IMR-90 (cell line): ENCODE measurements at regions of chr1 and their contacts with region 1.

Region 1: DNA sequence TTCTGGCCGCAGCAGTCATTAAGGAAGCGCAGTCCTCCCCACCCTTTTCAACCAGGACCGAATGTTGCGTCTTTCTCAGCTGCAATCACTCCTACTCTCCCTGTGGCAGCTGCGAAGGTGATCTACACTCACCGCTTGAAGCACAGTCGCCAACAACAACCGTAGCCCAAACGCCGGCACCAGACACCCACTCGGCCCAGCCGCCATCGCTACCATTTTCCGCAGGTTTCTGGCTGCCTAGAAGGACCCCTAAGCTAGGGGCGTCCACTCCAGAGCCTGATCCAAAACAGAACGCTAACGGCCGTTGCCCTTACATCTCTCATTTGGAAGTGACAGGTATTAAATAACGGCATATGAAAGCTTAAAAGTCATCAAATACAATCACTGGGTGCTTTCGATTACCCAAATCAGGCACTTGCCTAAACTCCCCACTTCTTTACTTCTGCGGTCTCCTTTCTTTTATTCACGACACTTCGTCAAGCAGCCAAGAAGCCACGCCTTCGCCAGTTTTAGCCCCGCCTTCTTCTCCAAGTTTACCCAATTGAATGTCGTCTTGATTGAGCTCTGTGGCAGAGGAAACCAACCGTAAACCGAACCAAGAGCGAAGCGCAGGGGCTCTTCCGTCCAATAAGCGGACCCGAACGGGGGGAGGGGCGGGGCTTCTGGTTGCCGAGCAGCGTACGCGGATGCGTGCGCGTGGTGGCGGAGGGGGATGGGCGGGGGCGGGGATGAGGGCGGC is at the start of gene SELENOF:
- DNase-seq: peak; percentile 100
- ATAC-seq: peak; percentile 94
- H3K4me3 ChIP-seq: peak within 1 kb of the TSS; percentile 85
- H3K27ac ChIP-seq: peak within 1 kb of the TSS; percentile 79
- H3K4me1 ChIP-seq: peaks cover 4% of the 10 kb centered on the region; the same call in 1 of the 2 replicates
- H3K27me3 ChIP-seq: no peaks in the 10 kb centered on the region
- CTCF ChIP-seq: no peak
- POLR2A ChIP-seq: peak; percentile 83
- RAD21 ChIP-seq: no peak
- total RNA-seq, gene SELENOF: 60.0 and 128 TPM in 2 replicates

Region 2: DNA sequence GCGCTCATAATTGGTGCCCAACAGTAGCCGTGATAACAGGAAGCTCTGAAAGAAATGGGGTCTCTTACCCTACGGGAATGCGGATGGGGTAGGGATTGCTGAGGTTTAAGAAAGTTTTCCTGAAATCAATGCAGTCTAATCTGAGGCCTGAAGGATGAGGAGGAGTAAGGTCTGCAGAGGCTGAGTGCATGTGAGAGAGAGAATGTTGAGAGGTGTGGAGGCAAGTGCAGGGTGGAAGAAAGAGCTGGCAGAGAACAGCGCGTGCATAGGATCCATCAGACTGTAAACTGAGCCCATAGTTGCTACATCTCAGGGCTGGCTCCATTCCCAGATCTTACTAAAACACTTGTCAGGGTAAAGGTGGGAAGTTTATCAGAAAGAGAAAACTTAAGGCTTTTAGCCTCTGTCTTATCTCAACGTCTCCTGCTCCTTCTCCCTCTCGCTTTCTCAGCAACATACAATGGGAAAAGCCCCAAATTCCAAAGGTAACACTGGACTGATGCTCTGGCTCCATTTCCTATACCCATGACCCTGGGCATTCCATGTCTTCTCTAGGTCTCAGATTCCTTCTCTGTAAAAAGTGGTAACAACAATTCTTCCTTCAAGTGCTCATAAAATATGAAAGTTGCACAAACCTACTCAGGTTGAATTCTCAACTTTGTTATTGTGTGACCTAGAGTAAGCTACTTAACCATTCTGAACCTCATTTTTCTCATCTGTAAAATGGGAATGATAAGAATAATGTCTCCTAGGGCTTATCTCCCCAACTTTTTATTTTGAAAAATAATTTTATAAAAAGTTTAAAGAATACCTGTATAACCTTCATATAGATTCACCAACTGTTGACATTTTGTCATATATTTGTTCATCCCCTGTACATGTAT is 134.5 kb before region 1 on chr1:
- CTCF ChIA-PET with region 1: no interaction called
- POLR2A ChIA-PET with region 1: no interaction called
- dilution Hi-C with region 1: no loop called
- in situ Hi-C with region 1: no loop called
- intact Hi-C with region 1: loop called (anchors 2 kb)
- DNase-seq: peak; percentile 92
- ATAC-seq: peak; percentile 48
- H3K4me3 ChIP-seq: no peak overlapping the region
- H3K27ac ChIP-seq: peak overlapping the region; percentile 6; the same call in 1 of the 2 replicates
- H3K4me1 ChIP-seq: peaks cover 19% of the 10 kb centered on the region
- H3K27me3 ChIP-seq: no peaks in the 10 kb centered on the region
- CTCF ChIP-seq: no peak
- POLR2A ChIP-seq: no peak
- RAD21 ChIP-seq: no peak

Region 3: GRCh38 chr1:86933562-86934377 is 19.7 kb after region 1 on chr1:
- CTCF ChIA-PET with region 1: interaction called, 5 read pairs
- POLR2A ChIA-PET with region 1: no interaction called
- dilution Hi-C with region 1: no loop called
- in situ Hi-C with region 1: no loop called
- intact Hi-C with region 1: loop called (anchors 2 kb)
- DNase-seq: no peak
- ATAC-seq: no peak; the same call in 1 of the 2 replicates
- H3K4me3 ChIP-seq: no peak overlapping the region
- H3K27ac ChIP-seq: no peak overlapping the region
- H3K4me1 ChIP-seq: no peaks in the 10 kb centered on the region
- H3K27me3 ChIP-seq: no peaks in the 10 kb centered on the region
- CTCF ChIP-seq: no peak
- POLR2A ChIP-seq: no peak
- RAD21 ChIP-seq: no peak

Region 4: DNA sequence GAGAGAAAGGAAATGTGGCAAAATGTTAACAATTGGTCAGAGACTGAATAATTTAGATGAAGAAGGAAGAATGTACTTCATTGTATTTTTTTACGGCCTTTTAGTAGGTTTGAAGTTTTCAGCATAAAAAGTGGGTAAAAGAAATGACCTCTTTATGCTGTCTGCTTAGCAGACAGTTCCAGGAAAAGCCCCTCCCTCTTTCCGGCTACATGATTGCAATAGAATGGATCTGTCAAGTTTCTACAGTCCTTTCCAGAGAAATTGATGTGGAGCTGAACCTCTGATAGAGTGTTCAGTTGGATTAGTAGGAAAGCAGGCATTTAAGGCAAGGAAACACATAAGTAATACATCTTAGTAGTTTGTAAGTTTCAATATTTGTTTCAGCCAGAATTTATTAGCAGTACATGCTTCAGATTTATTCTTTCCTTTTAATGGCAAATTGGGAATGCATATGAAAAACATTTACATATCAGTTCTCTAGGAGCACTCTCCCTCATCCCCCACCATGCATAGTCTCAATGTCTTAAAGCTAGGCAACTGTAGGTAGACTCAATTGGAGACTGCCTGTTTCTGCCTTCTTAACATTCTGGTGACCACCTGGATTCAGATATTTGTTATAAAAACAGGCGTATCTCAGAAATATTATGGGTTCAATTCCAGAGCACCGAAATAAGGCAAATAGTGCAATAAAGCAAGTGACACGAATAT is 36.8 kb after region 1 on chr1:
- CTCF ChIA-PET with region 1: no interaction called
- POLR2A ChIA-PET with region 1: no interaction called
- dilution Hi-C with region 1: no loop called
- in situ Hi-C with region 1: no loop called
- intact Hi-C with region 1: loop called (anchors 5 kb)
- DNase-seq: no peak
- ATAC-seq: no peak; the same call in 1 of the 2 replicates
- H3K4me3 ChIP-seq: no peak overlapping the region
- H3K27ac ChIP-seq: no peak overlapping the region
- H3K4me1 ChIP-seq: 0 out of 2 replicates have a peak, but pooled peaks cover 2% of the 10 kb centered on the region
- H3K27me3 ChIP-seq: no peaks in the 10 kb centered on the region
- CTCF ChIP-seq: no peak
- POLR2A ChIP-seq: no peak
- RAD21 ChIP-seq: no peak

Region 5: DNA sequence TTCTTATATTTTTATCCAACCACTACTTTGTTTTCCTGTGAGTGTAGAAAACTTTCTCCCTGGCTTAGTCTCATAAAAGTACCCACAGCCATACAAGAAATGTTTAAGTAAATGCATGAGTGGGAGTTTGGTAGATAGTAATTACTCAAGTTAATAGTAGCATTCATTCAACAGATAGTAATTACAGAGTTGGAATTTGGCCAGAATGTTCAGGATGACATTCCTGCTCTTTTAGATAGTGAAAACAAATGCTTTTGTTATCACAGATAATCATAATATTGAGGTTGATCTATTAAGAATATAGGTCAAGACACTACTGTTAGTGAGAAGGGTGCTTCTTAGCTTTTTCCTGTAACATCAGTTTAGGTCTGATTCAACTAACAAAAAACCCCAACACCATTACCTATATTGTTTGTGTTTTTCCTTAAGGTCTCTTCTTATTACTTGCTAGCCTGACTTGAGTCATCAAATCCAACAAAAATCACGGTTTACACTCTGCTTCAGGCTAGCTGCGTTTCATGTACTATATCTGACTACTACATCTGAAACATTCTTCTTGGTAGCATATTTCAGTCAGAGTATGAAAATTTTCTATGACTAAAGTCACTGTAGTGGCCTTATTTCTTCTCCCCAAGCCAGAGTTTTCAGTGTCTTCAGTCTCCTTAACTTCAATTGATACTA is 164.0 kb after region 1 on chr1:
- CTCF ChIA-PET with region 1: interaction called, 3 read pairs
- POLR2A ChIA-PET with region 1: no interaction called
- dilution Hi-C with region 1: no loop called
- in situ Hi-C with region 1: no loop called
- intact Hi-C with region 1: loop called (anchors 5 kb)
- DNase-seq: no peak
- ATAC-seq: no peak
- H3K4me3 ChIP-seq: no peak overlapping the region
- H3K27ac ChIP-seq: no peak overlapping the region
- H3K4me1 ChIP-seq: no peaks in the 10 kb centered on the region
- H3K27me3 ChIP-seq: no peaks in the 10 kb centered on the region
- CTCF ChIP-seq: no peak
- POLR2A ChIP-seq: no peak
- RAD21 ChIP-seq: no peak

Region 6: GRCh38 chr1:87180682-87181081 is 266.6 kb after region 1 on chr1:
- CTCF ChIA-PET with region 1: no interaction called
- POLR2A ChIA-PET with region 1: no interaction called
- dilution Hi-C with region 1: no loop called
- in situ Hi-C with region 1: no loop called
- intact Hi-C with region 1: no loop called
- DNase-seq: no peak
- ATAC-seq: no peak
- H3K4me3 ChIP-seq: no peak overlapping the region
- H3K27ac ChIP-seq: no peak overlapping the region
- H3K4me1 ChIP-seq: no peaks in the 10 kb centered on the region
- H3K27me3 ChIP-seq: peaks cover 3% of the 10 kb centered on the region
- CTCF ChIP-seq: no peak
- POLR2A ChIP-seq: no peak
- RAD21 ChIP-seq: no peak